PC-9 (cell line): ENCODE measurements at regions of chr1 and their contacts with region 1.

Region 1: DNA sequence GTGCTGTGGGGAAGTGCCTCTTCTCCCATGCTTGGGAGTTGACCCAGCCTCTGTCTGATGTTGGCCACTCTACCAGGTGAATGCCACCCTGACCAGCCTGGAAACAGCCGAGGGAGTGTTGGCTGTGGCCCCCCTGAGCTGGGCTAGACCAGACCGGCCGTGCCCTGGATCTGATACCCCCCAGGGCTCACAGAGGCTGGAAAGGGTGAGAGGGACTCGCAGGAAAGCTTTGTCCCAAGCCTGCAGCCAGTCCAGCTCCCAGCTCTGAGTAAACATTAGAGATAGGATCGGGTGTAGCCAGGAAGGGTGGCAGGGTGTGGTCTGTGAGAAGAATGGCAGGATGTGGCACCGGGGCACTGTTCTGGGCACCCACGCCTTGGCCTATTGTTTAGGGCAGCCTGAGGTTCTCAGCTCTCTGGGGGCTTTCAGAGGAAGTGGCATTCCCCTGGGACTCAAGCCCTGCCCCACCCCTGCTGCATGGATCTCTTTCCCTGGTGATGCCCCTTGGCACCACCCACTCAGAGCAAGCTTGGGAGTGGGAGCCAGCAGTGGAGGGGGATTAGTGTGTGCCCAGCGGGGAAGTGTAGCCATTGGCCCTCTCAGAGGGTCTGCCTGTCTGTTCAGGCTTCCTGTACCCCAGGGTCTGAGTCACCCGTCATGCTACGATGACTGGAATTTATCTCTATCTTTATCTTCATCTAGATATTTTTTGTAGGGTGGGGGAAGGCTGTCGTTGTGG is 31.4 kb downstream of the SOX13 start:
- DNase-seq: peak; percentile 88 to 92
- H3K4me3 ChIP-seq: peak overlapping the region; percentile 38
- H3K27ac ChIP-seq: peak overlapping the region; percentile 96
- H3K4me1 ChIP-seq: peaks cover 84% of the 10 kb centered on the region
- H3K27me3 ChIP-seq: no peaks in the 10 kb centered on the region
- CTCF ChIP-seq: no peak

Region 2: DNA sequence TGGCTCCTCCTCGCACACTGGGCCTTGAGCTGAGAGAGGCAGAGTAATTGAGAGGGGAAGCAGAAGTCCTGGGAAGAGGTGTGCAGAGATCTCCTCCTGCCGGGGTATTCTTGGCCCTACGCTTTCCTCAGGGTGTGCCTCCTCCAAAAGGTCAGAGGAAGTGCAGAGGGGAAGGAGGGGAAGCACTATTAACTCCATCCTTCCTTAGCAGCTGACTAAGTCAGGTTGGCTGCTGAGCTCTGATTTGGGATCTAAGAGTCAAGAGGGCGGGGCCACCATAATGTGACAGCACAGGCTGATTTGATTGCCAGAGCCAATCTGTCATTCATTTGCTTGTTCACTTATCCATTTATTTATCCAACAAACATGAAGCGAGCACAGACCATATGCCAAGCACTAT is 465.4 kb before region 1 on chr1:
- CTCF ChIA-PET with region 1: no interaction called
- POLR2A ChIA-PET with region 1: interaction called, 12 read pairs
- intact Hi-C with region 1: no loop called
- DNase-seq: no peak
- H3K4me3 ChIP-seq: no peak overlapping the region
- H3K27ac ChIP-seq: no peak overlapping the region
- H3K4me1 ChIP-seq: peaks cover 27% of the 10 kb centered on the region
- H3K27me3 ChIP-seq: no peaks in the 10 kb centered on the region
- CTCF ChIP-seq: no peak

Region 3: GRCh38 chr1:204059970-204060369 is 44.3 kb before region 1 on chr1:
- CTCF ChIA-PET with region 1: no interaction called
- POLR2A ChIA-PET with region 1: no interaction called
- intact Hi-C with region 1: loop called (anchors 1 kb)
- DNase-seq: no peak
- H3K4me3 ChIP-seq: no peak overlapping the region
- H3K27ac ChIP-seq: no peak overlapping the region
- H3K4me1 ChIP-seq: peaks cover 54% of the 10 kb centered on the region
- H3K27me3 ChIP-seq: no peaks in the 10 kb centered on the region
- CTCF ChIP-seq: no peak

Region 4: DNA sequence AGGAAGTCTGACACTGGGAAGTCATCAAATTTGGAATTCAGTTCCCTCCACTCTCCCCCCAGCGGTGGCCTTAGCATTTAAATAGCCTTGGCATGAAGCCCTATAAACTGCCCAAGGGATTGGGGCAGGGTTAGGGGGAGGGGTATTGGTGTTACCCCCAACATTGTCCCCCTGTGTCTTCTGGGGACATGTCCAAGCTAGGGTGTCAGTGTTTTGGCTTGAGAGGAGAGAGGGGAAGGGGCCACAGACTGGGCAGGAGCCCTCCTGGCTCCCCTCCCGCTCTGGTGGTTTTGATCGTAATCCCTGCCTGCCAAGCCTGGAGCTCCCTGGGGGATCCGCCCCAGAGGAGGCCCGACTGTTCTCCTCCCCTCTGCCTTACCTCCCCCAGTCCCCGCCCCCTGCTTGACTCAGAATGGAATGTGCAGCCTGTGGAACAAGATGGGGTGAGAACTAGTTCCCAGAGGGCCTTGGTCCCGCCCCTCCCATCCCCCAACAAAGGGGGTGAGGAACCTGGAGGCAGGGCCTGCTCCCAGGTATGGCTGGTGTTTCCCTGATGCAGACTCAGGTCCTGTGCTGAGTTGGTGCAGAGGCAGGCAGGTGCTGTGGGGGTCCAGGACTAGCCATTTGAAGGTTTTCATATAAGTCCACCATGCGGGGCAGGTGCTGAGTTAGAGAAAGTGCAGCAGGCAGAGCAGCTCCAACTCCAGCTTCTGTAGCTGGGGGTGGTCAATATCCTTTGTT is 24.0 kb before region 1 on chr1:
- CTCF ChIA-PET with region 1: interaction called, 3 read pairs
- POLR2A ChIA-PET with region 1: no interaction called
- intact Hi-C with region 1: loop called (anchors 1 kb)
- DNase-seq: peak; percentile 92 to 94
- H3K4me3 ChIP-seq: peak overlapping the region; percentile 35; the same call in 1 of the 2 replicates
- H3K27ac ChIP-seq: peak overlapping the region; percentile 77
- H3K4me1 ChIP-seq: peaks cover 96% of the 10 kb centered on the region
- H3K27me3 ChIP-seq: no peaks in the 10 kb centered on the region
- CTCF ChIP-seq: no peak